HEK293 (cell line): ENCODE measurements at regions of chr6 and their contacts with region 1.

Region 1: GRCh38 chr6:25223490-25223991 is 55.6 kb upstream of the CARMIL1 start:
- H3K4me3 ChIP-seq: no peak overlapping the region
- H3K27ac ChIP-seq: no peak overlapping the region
- H3K4me1 ChIP-seq: peaks cover 9% of the 10 kb centered on the region
- CTCF ChIP-seq: peak; percentile 75

Region 2: GRCh38 chr6:25244865-25245264 is 21.3 kb after region 1 on chr6:
- CTCF ChIA-PET with region 1: interaction called, 12 read pairs
- POLR2A ChIA-PET with region 1: no interaction called
- H3K4me3 ChIP-seq: no peak overlapping the region
- H3K27ac ChIP-seq: no peak overlapping the region
- H3K4me1 ChIP-seq: no peaks in the 10 kb centered on the region; the same call in 1 of the 2 replicates
- CTCF ChIP-seq: no peak

Region 3: GRCh38 chr6:25278914-25279747 is 55.6 kb after region 1 on chr6 and contains the start of gene CARMIL1:
- CTCF ChIA-PET with region 1: interaction called, 11 read pairs
- POLR2A ChIA-PET with region 1: interaction called, 3 read pairs
- H3K4me3 ChIP-seq: peak within 1 kb of the TSS; percentile 83
- H3K27ac ChIP-seq: peak within 1 kb of the TSS; percentile 89
- H3K4me1 ChIP-seq: peaks cover 15% of the 10 kb centered on the region
- CTCF ChIP-seq: peak; percentile 86

Region 4: DNA sequence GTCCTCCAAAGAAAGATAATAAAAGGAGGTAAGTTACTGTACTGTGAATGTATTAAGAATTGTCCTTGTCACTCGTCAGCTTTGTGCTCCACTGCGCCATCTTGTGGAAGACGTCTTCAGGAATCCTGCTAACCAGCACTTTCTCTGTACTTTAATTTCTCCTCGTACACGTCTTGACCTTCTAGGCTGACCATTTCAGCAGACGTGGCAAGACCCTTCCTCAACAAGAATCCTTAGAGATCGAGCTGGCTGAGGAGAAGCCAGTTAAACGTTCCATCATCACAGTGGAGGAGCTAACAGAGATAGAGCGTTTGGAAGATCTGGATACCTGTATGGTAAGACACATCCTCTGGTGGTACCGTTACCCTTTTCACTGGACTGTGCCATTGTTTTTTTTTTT is 333.0 kb after region 1 on chr6:
- CTCF ChIA-PET with region 1: interaction called, 49 read pairs
- POLR2A ChIA-PET with region 1: no interaction called
- H3K4me3 ChIP-seq: no peak overlapping the region
- H3K27ac ChIP-seq: no peak overlapping the region
- H3K4me1 ChIP-seq: no peaks in the 10 kb centered on the region
- CTCF ChIP-seq: peak; percentile 50; the same call in 1 of the 2 replicates

Region 5: DNA sequence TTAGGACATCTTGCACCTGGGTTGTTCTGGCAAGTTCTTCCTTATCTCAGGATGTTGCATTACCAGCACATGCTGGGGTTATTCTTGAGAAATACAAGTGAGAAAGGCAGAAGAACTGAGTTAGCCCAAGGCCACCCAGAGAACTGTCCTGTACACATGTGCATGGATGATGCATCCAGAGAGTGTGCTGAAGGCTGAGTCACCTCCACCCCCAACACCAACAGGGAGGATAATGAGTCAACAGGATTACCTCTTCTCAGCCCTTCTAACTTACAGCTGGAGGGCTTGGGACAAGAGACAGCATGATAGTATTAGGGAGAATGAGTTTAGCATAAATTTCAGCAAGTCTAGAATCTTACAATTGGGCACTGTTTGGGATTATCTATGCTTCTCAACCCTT is 437.0 kb after region 1 on chr6:
- CTCF ChIA-PET with region 1: no interaction called
- POLR2A ChIA-PET with region 1: no interaction called
- H3K4me3 ChIP-seq: no peak overlapping the region
- H3K27ac ChIP-seq: no peak overlapping the region
- H3K4me1 ChIP-seq: no peaks in the 10 kb centered on the region
- CTCF ChIP-seq: no peak

Region 6: GRCh38 chr6:25717866-25718740 is 494.6 kb after region 1 on chr6:
- CTCF ChIA-PET with region 1: interaction called, 21 read pairs
- POLR2A ChIA-PET with region 1: no interaction called
- H3K4me3 ChIP-seq: no peak overlapping the region
- H3K27ac ChIP-seq: no peak overlapping the region
- H3K4me1 ChIP-seq: no peaks in the 10 kb centered on the region
- CTCF ChIP-seq: no peak